CD8-positive, alpha-beta memory T cell (primary cell): ENCODE measurements at regions of chr19 and their contacts with region 1.

Region 1: DNA sequence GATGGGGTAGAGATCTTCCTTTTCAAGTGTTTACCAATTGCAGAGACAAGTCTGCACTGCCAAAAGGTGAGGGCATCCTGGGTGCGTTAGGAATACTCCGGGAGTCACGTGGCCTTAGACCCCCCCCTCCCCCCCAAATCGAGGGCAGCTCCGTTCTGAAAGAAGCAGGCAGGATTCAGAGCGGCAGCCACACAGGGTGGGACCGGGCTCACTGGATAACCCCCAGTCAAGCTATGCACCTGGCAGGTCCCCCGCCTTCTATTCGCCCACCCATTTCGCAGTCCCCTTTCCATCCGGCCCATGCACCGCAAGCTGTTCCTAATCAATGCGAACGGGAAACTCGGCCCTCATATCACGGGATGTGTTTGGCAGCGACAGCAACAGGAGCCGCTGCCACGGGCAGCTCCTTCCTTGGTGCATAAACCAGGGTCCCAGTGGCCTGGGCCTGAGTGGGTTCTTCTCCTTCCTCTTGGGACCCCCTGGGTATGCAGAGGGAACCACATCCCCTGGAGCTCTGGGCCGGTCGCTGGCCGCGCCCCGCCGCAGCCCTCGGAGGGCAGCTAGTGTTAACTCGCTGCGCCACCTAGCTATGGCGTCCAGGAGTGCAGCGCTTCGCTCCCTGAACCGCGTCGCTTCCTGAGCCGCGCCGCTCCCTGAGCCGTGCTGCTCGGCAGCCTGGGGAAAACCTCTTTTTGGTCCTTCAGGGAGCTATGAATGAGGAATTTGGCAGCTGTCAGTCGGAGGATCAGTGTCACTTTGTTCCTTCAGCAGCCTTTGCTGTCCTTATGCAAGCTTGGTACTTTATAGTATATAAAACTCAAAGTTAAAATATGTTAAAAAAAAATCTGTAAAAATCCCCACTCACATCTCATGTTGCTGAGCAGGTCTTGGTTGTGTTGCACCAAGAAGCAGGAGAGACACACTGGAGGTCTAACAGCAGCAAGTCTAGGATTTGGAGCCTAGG is 41.4 kb downstream of the LYL1 start:
- DNase-seq: peak; percentile 63 to 76 (median 67)
- H3K4me3 ChIP-seq: peak overlapping the region; percentile 81
- H3K4me3 Mint-ChIP-seq: peak overlapping the region; percentile 72 to 94 (median 77)
- H3K27ac ChIP-seq: no peak overlapping the region
- H3K27ac Mint-ChIP-seq: peak overlapping the region in 3 of 8 donors; percentile 23 to 66 (median 47)
- H3K4me1 ChIP-seq: peaks cover 16% of the 10 kb centered on the region
- H3K4me1 Mint-ChIP-seq: peaks cover 8 to 11% (median 11%) of the 10 kb centered on the region in 3 donors
- H3K27me3 ChIP-seq: peaks cover 4% of the 10 kb centered on the region
- H3K27me3 Mint-ChIP-seq: peaks cover 15 to 33% of the 10 kb centered on the region in 2 donors

Region 2: DNA sequence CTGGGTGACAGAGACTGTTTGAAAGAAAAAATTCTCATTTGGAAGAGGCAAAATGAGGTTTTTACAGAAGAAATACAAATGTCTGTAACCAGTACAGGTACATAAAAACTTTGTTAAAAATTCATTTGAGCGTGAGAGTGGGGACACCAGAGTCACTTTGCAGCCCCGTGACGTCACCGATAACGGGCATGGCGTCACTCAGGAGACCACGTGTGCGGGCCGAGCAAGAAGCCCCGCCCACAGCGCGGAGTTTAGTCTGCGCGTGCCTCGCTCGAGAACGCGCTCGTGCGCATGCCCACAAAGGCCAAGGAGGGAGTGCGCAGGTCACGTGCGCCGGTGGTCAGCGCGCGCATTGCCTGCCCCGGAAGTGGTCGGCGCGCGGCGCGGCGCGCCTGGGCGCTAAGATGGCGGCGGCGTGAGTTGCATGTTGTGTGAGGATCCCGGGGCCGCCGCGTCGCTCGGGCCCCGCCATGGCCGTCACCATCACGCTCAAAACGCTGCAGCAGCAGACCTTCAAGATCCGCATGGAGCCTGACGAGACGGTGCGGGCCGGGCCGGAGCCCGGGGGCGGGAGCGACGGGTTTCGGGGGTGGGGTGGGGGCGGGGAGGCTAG is 115.7 kb before region 1 on chr19 and contains the start of gene RAD23A:
- CTCF ChIA-PET with region 1: no interaction called
- POLR2A ChIA-PET with region 1: no interaction called
- DNase-seq: peak; percentile 98 to 99 (median 98)
- H3K4me3 ChIP-seq: peak within 1 kb of the TSS; percentile 73
- H3K4me3 Mint-ChIP-seq: peak within 1 kb of the TSS; percentile 87 to 96 (median 91)
- H3K27ac ChIP-seq: peak within 1 kb of the TSS; percentile 74
- H3K27ac Mint-ChIP-seq: peak within 1 kb of the TSS; percentile 95 to 98 (median 96)
- H3K4me1 ChIP-seq: peaks cover 31% of the 10 kb centered on the region
- H3K4me1 Mint-ChIP-seq: peaks cover 34 to 62% (median 38%) of the 10 kb centered on the region in 3 donors
- H3K27me3 ChIP-seq: no peaks in the 10 kb centered on the region
- H3K27me3 Mint-ChIP-seq: peaks cover 0 to 6% of the 10 kb centered on the region in 2 donors
- total RNA-seq, gene RAD23A: 227 to 230 TPM

Region 3: DNA sequence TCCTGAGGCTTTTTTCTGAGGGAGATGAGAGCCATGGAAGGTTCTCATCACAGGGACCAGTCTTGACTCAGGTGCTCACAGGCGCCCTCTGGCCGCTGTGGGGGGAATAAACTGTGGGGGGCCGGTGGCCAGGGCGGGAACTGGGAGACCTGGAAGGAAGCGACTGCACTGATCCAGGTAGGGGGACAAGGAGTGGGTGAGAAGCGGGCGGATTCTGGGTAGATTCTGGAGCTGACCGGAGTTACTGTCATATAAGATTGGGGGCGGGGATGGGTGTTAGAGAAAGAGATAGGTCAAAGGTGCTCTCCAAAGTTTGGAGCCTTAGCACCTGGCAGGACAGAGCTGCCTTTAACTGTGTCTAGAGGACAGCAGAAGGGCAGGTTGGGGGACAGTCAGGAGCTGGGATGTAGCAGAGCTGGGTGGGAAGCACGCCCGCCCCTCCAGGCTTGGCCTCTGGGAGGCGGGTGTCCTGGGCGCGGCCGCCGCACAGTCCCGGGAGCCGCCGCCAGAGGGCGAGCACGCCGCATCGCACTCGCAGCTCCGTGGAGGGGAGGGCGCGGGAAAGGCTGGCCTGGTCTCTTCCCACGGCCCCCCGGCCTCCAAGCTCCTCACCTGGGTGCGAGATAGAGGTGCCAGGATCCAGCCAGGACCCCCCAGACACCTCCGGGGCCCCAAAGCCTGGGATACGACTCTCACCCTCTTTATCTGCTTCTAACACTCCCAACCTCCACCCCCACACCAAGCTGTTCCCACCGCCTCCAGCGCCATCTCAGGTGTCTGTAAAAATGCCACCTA is 96.0 kb before region 1 on chr19:
- CTCF ChIA-PET with region 1: interaction called, 39 read pairs
- POLR2A ChIA-PET with region 1: interaction called, 3 read pairs
- DNase-seq: peak; percentile 71 to 83 (median 72)
- H3K4me3 ChIP-seq: peak overlapping the region; percentile 93
- H3K4me3 Mint-ChIP-seq: peak overlapping the region; percentile 17 to 92 (median 89)
- H3K27ac ChIP-seq: peak overlapping the region; percentile 64
- H3K27ac Mint-ChIP-seq: peak overlapping the region in 6 of 8 donors; percentile 1 to 86 (median 78)
- H3K4me1 ChIP-seq: no peaks in the 10 kb centered on the region
- H3K4me1 Mint-ChIP-seq: peaks cover 5 to 8% (median 5%) of the 10 kb centered on the region in 3 donors
- H3K27me3 ChIP-seq: no peaks in the 10 kb centered on the region
- H3K27me3 Mint-ChIP-seq: peaks cover 0 to 3% of the 10 kb centered on the region in 2 donors

Region 4: DNA sequence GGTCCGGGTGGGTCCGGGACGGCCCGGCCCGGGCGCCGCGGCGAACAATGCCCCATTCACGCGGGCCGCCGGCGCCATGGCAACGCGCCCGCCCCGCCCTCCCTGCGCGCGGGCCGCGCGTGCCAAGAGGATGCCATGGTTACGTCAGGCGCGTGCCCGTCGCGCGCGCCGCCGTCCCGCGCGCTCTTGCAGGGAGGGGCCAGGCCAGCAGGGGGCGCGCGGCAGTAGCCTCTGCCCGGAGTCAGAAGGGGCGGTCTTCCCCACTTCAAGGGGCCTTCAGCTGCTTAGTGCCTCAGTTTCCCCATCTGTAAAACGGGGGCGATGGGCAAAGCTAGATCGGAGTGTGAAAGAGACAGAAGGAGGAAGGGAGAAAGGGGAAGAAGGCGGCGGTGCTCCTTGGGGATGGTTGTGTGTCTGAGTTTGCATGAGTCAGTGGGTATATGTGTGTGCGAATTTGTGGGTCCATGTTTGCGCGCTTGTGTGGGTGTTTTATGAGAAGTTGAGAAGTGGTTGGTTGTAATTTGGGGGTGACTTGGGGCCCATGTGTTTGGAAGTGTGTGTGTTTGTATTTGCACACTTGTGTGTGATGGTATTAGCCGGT is 77.6 kb before region 1 on chr19:
- CTCF ChIA-PET with region 1: interaction called, 95 read pairs
- POLR2A ChIA-PET with region 1: no interaction called
- DNase-seq: peak; percentile 72 to 84 (median 78)
- H3K4me3 ChIP-seq: peak overlapping the region; percentile 47
- H3K4me3 Mint-ChIP-seq: no peak overlapping the region
- H3K27ac ChIP-seq: no peak overlapping the region
- H3K27ac Mint-ChIP-seq: no peak overlapping the region
- H3K4me1 ChIP-seq: peaks cover 28% of the 10 kb centered on the region
- H3K4me1 Mint-ChIP-seq: peaks cover 8 to 10% (median 10%) of the 10 kb centered on the region in 3 donors
- H3K27me3 ChIP-seq: peaks cover 7% of the 10 kb centered on the region
- H3K27me3 Mint-ChIP-seq: peaks cover 5 to 11% of the 10 kb centered on the region in 2 donors

Region 5: DNA sequence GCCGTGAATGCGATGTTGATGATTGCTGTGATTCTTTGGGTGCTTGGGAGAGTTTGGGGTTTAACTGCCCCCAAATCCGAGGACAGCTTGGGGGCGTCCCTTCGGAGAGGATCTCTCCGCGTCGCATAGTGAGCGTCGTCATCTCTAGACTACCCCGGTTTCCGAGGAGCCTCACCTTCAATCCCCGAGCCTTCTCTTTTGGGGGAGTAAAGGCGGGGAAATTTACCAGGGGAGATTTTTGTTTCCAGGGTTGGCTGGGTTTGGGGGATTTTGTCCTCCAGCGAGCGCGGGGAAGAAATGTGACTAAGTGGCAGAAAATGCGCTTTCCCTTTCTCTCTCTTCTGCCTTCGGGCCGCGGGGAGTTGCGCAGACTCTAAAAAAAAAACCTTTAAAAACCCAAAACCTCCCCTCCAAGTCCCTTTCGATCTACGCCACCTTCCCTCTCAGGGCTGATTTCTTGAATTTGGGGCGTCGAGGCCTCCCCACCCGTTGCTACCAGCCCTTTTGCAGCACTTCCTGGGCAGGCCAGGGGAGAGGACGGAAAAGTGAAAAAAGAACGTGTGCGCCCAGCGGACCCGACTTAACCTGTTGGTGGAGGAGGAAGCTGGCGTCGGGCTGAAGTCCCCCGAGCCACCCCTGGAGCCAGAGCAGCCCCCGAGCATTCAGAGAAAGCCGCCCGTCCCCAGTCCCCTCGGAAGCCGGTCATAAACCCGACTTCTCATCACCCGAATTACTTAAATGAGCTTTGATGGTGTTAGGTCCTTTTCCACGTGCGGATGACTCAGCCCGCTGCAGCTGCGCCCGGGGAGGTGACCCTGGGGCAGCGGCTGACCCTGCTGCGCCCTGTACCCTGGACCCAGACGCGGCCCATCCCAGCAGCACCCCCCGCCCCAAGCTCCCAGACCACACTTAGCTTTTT is 48.3 kb before region 1 on chr19:
- CTCF ChIA-PET with region 1: interaction called, 20 read pairs
- POLR2A ChIA-PET with region 1: no interaction called
- DNase-seq: peak in 3 of 5 donors; percentile 13 to 36 (median 26)
- H3K4me3 ChIP-seq: peak overlapping the region; percentile 52
- H3K4me3 Mint-ChIP-seq: peak overlapping the region; percentile 80 to 96 (median 86)
- H3K27ac ChIP-seq: no peak overlapping the region
- H3K27ac Mint-ChIP-seq: peak overlapping the region; percentile 46 to 92 (median 73)
- H3K4me1 ChIP-seq: peaks cover 25% of the 10 kb centered on the region
- H3K4me1 Mint-ChIP-seq: peaks cover 23 to 29% (median 23%) of the 10 kb centered on the region in 3 donors
- H3K27me3 ChIP-seq: peaks cover 34% of the 10 kb centered on the region
- H3K27me3 Mint-ChIP-seq: peaks cover 63 to 86% of the 10 kb centered on the region in 2 donors

Region 6: DNA sequence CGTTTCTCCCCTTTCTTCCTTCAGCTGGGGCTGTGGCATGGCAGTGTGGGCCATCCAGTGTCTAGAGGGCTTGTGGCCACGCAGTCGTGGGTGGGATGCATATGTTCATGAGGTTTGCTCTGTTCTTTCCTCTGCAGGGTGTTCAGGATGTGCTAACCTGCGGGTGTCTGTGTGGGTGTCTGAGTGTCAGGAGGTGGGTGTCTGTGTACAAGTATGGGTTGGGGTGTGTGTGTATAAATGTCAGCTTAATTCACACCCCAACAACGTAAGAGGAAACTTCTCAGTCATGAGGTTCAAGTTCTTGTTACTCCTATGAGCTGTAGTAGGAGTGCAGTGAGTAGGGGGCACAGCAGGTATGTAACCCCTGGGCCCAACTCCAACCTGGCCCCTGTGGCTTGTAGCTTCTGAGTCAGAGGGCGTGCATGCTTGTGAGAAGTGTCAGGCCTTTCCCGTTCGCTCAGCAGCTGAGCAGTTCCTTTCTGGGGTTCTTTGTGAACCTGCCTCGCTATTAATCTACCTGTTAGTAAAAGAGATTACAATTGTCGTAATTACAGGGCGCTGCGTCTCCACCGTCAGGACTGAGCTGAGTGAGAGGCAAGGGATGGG is 16.9 kb before region 1 on chr19:
- CTCF ChIA-PET with region 1: interaction called, 15 read pairs
- POLR2A ChIA-PET with region 1: no interaction called
- DNase-seq: peak; percentile 44 to 85 (median 60)
- H3K4me3 ChIP-seq: no peak overlapping the region
- H3K4me3 Mint-ChIP-seq: peak overlapping the region; percentile 2 to 80 (median 49)
- H3K27ac ChIP-seq: peak overlapping the region; percentile 64
- H3K27ac Mint-ChIP-seq: peak overlapping the region; percentile 71 to 99 (median 96)
- H3K4me1 ChIP-seq: peaks cover 31% of the 10 kb centered on the region
- H3K4me1 Mint-ChIP-seq: peaks cover 30 to 39% (median 30%) of the 10 kb centered on the region in 3 donors
- H3K27me3 ChIP-seq: no peaks in the 10 kb centered on the region
- H3K27me3 Mint-ChIP-seq: peaks cover 0 to 3% of the 10 kb centered on the region in 2 donors